ENCODE measurements at regions of chr16 and their contacts with region 1.

Region 1: DNA sequence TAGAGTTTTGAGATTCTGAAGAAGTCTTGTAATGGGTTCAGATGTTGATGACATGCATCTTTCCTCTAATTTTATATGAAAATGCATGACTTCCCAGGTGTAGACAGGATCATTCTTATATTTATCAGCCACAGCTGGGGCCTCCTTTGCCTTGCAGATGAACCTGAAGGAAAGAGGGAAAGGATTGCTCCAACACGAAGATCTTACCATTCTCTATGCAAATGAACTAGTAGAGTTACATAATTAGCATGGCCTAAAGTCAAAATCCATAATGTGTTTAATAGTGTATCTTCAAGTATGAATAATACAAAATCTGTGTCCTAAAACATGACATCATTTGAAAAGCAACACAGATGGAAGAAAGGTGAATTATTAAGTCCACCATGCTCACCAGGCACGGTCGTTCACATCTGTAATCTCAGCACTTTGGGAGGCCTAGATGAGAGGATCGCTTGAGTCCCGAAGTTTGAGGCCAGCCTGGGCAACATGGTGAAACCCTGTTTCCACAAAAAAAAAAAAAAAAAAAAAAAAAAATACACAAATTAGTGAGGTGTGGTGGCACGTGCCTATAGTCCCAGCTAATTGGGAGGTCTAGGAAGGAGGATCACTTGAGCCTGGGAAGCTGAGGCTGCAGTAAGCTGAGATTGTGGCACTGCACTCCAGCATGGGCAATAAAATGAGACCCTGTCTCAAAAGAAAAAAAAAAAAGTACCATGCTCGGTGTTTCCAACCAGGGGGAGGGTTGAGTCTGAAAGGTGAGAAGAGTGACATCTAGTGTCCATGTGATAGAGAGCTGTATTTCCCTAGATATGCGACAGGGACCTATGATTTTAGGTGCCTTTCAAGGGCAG is 6.3 kb downstream of the VWA3A start:
- DNase-seq: no peak
- H3K4me3 ChIP-seq: no peak overlapping the region
- H3K27me3 ChIP-seq: no peaks in the 10 kb centered on the region
- CTCF ChIP-seq: peak; percentile 74

Region 2: DNA sequence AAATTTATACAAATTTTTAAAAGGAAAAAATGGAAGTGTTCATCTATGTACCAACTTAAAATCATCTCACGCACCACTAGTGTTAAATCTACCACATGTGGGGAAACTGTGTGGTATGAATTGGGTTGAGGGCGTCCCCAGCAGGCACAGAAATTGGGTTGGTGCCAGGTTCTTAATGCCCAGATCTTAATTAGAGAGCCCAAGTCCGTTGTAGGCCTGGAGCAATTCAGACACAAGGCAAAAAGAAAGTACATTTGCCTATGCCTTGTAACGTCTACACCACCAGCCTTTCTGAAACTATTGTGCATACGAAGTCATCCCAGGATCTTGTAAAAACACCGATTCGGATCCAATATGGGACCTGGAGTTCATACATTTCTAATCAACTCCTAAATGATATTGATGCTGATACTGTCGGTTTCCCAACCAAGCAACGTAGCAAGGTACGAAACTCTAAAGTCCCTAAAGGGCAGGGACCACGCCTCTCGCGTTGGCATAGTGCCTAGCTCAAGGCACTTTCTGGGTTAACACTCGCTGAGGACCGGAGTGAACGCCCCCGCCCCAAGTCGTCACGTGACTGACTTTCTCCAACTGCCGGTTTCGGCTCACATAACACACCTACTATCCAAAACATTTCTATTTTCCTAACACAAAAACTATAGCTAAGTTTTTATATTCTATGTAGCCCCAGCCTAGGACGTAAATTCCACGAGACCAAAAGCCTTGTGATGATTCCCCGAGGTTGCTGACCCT is 146.4 kb before region 1 on chr16:
- CTCF ChIA-PET with region 1: interaction called, 16 read pairs
- POLR2A ChIA-PET with region 1: no interaction called
- DNase-seq: no peak
- H3K4me3 ChIP-seq: peak overlapping the region; percentile 87
- H3K27me3 ChIP-seq: no peaks in the 10 kb centered on the region
- CTCF ChIP-seq: no peak

Region 3: DNA sequence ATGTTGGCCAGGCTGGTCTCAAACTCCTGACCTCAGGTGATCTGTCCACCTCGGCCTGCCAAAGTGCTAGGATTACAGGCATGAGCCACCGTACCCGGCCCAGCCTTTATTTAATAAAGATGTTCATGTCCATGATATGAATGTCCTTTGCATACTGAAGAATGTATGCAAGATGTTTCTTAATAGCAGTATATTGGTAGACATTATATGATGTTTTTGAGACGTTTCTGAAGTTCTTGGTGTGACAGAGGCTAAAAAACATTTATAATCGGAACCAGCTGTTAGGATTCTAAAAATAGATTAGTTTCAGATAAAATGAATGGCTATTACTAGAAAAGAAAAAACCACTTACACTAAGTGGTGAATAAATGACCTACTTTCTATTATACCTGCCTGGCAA is 109.5 kb before region 1 on chr16:
- CTCF ChIA-PET with region 1: interaction called, 12 read pairs
- POLR2A ChIA-PET with region 1: no interaction called
- DNase-seq: peak; percentile 19
- H3K4me3 ChIP-seq: no peak overlapping the region
- H3K27me3 ChIP-seq: no peaks in the 10 kb centered on the region
- CTCF ChIP-seq: no peak

Region 4: DNA sequence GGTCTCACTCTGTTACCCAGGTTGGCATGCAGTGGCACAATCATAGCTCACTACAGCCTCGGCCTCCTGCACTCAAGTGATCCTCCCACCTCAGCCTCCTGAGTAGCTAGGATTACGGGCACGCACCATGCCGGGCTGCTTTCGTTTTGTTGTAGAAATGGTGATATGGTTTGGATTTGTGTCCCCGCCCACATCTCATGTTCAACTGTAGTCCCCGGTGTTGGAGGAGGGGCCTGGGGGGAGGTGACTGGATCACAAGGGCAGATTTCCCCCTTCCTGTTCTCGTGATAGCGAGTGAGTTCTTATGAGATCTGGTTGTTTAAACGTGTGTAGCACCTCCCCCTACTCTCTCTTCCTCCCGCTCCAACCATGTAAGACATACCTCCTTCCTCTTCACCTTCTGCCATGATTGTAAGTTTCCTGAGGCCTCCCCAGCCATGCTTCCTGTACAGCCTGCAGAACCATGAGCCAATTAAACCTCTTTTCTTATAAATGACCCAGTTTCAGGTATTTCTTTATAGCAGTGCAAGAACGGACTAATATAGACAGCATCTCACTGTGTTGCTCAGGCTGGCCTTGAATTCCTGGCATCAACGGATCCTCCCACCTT is 103.7 kb before region 1 on chr16:
- CTCF ChIA-PET with region 1: interaction called, 84 read pairs
- POLR2A ChIA-PET with region 1: no interaction called
- DNase-seq: no peak
- H3K4me3 ChIP-seq: no peak overlapping the region
- H3K27me3 ChIP-seq: no peaks in the 10 kb centered on the region
- CTCF ChIP-seq: no peak

Region 5: DNA sequence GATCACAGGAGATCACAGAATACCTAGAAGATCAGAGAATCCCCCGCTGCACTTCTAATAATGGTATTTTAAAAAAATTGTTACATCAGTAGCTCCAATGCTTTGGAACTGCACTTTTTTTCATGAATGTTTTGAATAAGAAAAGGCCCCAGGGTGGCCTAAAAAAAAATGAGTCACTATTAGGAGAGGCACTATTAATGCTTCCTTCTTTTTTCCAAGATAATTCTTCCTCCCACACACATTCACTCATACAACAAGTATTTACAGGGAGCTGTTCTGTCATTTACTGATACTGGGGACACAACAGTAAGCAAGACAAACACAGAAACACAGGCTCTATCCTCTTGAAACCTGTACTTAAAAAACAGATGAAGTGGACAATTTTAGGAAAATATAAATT is 97.0 kb before region 1 on chr16:
- CTCF ChIA-PET with region 1: interaction called, 84 read pairs
- POLR2A ChIA-PET with region 1: no interaction called
- DNase-seq: peak; percentile 72
- H3K4me3 ChIP-seq: no peak overlapping the region
- H3K27me3 ChIP-seq: no peaks in the 10 kb centered on the region
- CTCF ChIP-seq: no peak

Region 6: DNA sequence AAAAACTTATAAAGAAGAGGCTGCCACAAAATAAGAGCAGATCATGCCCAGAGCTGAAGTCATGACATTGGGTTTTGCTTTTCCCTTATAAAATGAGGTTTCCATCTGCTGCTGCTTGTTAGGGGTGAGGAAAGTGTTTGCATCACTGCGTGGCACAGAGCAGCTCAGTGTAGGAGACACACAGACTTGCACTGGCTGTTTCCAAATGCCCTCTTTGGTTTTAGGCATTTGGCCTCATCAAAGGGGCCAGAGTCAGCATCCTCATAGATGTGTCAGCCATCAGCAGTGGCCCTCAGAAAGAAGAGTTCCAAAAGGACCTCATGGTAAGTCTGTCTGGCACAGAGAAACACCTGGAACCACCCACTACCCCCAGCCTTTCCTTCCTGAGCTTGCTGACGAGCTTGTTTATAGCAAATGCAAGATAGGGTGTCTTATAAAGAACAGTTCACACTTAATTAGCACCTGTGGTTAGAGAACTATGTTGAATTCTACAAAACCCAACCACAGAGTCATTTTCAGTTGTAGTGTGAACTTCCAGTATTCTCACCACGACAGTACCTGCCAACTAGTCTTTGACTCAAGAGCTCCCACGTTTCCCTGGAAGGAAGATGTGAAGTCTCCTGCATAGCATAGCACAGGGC is 10.7 kb after region 1 on chr16:
- CTCF ChIA-PET with region 1: interaction called, 25 read pairs
- POLR2A ChIA-PET with region 1: interaction called, 4 read pairs
- DNase-seq: no peak
- H3K4me3 ChIP-seq: no peak overlapping the region
- H3K27me3 ChIP-seq: peaks cover 10% of the 10 kb centered on the region
- CTCF ChIP-seq: no peak

Region 7: DNA sequence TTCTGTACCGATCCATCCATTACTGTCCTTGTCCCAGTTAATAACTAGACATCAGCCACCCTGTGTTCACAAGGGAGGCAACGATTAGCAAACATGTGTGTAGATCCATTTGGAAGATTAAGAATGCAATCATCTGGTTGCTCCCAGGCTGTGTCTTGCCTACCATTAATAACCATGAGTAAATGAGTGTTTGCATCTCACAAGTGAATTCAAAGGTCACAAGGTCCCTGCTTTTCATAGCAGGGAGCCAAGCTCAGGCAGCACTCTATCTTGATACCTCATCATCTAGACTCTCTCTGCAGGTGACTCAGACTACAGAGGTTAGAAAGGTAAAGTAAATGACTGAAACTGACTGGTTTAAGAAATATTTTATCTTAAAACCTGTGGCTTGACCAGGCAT is 19.0 kb after region 1 on chr16:
- CTCF ChIA-PET with region 1: interaction called, 10 read pairs
- POLR2A ChIA-PET with region 1: no interaction called
- DNase-seq: no peak
- H3K4me3 ChIP-seq: no peak overlapping the region
- H3K27me3 ChIP-seq: 0 out of 2 replicates have a peak, but pooled peaks cover 1% of the 10 kb centered on the region
- CTCF ChIP-seq: no peak